Left lung (tissue), 14 donors: ENCODE measurements at regions of chr7 and their contacts with region 1.

Region 1: GRCh38 chr7:39465055-39465929 is 100.9 kb upstream of the YAE1 start:
- DNase-seq: peak in 2 of 4 donors; percentile 43 to 70
- ATAC-seq: peak; percentile 93
- H3K4me3 ChIP-seq: no peak overlapping the region
- H3K27ac ChIP-seq: no peak overlapping the region
- H3K4me1 ChIP-seq: no peaks in the 10 kb centered on the region
- H3K27me3 ChIP-seq: no peaks in the 10 kb centered on the region
- CTCF ChIP-seq: peak; percentile 59

Region 2: GRCh38 chr7:38801786-38802185 is 663.5 kb before region 1 on chr7:
- intact Hi-C with region 1: loop called in 1 of 2 experiments (anchors 10 kb)
- DNase-seq: no peak
- ATAC-seq: no peak
- H3K4me3 ChIP-seq: no peak overlapping the region
- H3K27ac ChIP-seq: no peak overlapping the region
- H3K4me1 ChIP-seq: no peaks in the 10 kb centered on the region
- H3K27me3 ChIP-seq: no peaks in the 10 kb centered on the region
- CTCF ChIP-seq: no peak

Region 3: GRCh38 chr7:38932509-38933168 is 532.7 kb before region 1 on chr7:
- intact Hi-C with region 1: loop called in 1 of 2 experiments (anchors 5 kb)
- DNase-seq: peak in 3 of 4 donors; percentile 56 to 67 (median 67)
- ATAC-seq: peak; percentile 48
- H3K4me3 ChIP-seq: no peak overlapping the region
- H3K27ac ChIP-seq: no peak overlapping the region
- H3K4me1 ChIP-seq: peaks cover 6 to 19% of the 10 kb centered on the region in 2 donors
- H3K27me3 ChIP-seq: no peaks in the 10 kb centered on the region
- CTCF ChIP-seq: peak; percentile 78 to 81